GM13977 (cell line): ENCODE measurements at regions of chr6 and their contacts with region 1.

Region 1: DNA sequence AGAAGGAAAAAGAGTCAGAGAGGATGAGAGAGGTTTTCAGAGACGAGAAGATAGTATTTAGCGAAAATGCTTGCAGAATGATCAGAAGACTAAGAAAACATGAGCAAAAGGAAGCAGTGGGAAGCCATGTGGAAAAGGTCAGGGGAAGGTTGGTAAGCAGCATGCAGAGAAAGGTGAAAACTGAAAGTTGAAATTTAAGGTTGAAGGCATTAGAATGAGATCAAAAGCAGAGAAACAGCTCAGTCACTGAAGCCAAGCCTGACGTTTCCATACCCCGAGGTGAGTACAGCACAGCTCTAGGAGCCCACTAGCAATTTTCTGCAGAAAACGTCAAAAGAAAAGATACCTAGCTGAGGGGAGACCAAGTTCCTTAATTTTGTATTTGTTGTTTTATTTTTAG is 19.1 kb upstream of the TFB1M start:
- DNase-seq: peak; percentile 19
- CTCF ChIP-seq: no peak

Region 2: GRCh38 chr6:155174576-155175211 is 158.7 kb before region 1 on chr6:
- in situ Hi-C with region 1: no loop called
- DNase-seq: peak; percentile 63
- CTCF ChIP-seq: peak; percentile 69

Region 3: GRCh38 chr6:155228546-155229166 is 104.8 kb before region 1 on chr6:
- in situ Hi-C with region 1: no loop called
- DNase-seq: no peak
- CTCF ChIP-seq: no peak

Region 4: GRCh38 chr6:155523821-155524651 is 190.6 kb after region 1 on chr6:
- in situ Hi-C with region 1: loop called (anchors 5 kb)
- DNase-seq: no peak
- CTCF ChIP-seq: no peak